Naive thymus-derived CD4-positive, alpha-beta T cell (primary cell): ENCODE measurements at regions of chr12 and their contacts with region 1.

Region 1: GRCh38 chr12:9707864-9708808 is 24.8 kb downstream of the CLECL1 start:
- DNase-seq: peak; percentile 35 to 79 (median 72)
- ATAC-seq: peak; percentile 92
- H3K4me3 ChIP-seq: peak overlapping the region; percentile 46
- H3K4me3 Mint-ChIP-seq: peak overlapping the region; percentile 56 to 82 (median 73)
- H3K27ac ChIP-seq: peak overlapping the region; percentile 66
- H3K27ac Mint-ChIP-seq: peak overlapping the region; percentile 80 to 98 (median 95)
- H3K4me1 ChIP-seq: peaks cover 30 to 31% of the 10 kb centered on the region in 2 donors
- H3K4me1 Mint-ChIP-seq: peaks cover 34 to 86% (median 81%) of the 10 kb centered on the region in 7 donors
- H3K27me3 ChIP-seq: no peaks in the 10 kb centered on the region
- H3K27me3 Mint-ChIP-seq: no peaks in the 10 kb centered on the region

Region 2: GRCh38 chr12:9331218-9331626 is 376.9 kb before region 1 on chr12:
- CTCF ChIA-PET with region 1: interaction called, 3 read pairs
- POLR2A ChIA-PET with region 1: no interaction called
- intact Hi-C with region 1: loop called (anchors 1 to 2 kb)
- DNase-seq: peak; percentile 21 to 77 (median 55)
- ATAC-seq: peak; percentile 87
- H3K4me3 ChIP-seq: no peak overlapping the region
- H3K4me3 Mint-ChIP-seq: peak overlapping the region in 2 of 10 donors; percentile 6 to 33
- H3K27ac ChIP-seq: no peak overlapping the region
- H3K27ac Mint-ChIP-seq: peak overlapping the region in 4 of 9 donors; percentile 50 to 66 (median 62)
- H3K4me1 ChIP-seq: peaks cover 0 to 3% of the 10 kb centered on the region in 2 donors
- H3K4me1 Mint-ChIP-seq: peaks cover 18 to 31% (median 23%) of the 10 kb centered on the region in 7 donors
- H3K27me3 ChIP-seq: no peaks in the 10 kb centered on the region
- H3K27me3 Mint-ChIP-seq: peaks cover 0 to 2% (median 0%) of the 10 kb centered on the region in 5 donors

Region 3: DNA sequence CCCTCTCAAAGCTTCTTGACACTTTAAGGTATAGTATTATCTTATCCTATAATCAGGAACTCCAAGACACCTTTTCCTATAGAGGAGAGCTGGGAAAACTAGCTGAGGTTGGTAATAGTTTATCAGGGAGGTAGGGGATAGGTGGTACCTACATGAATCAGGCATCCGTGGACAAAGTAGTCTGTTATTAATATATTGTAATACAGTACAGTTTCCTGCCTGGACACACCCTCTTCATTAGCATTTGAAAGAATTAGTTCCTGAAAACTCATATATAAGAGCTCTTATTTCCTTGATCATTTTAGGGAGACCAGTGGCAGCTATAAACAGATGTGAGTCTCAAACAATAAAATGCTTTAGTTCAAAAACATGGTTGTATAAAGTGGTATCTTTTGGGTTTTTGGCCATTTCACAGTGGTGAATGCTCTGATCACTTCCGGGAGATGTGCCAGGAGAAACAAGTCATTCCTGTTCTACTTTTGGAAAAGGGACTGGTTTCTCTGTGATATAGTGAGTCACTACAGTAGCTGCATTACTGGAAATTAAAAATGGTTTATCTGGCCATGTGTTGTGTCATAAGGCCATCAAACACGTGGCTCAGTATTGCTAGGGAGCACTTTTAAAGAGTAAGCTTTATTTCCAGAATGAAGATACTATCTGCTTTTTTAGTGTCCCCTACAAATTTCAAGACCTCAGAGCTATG is 198.5 kb before region 1 on chr12:
- CTCF ChIA-PET with region 1: no interaction called
- POLR2A ChIA-PET with region 1: no interaction called
- intact Hi-C with region 1: loop called in 1 of 2 experiments (anchors 10 kb)
- DNase-seq: no peak
- ATAC-seq: no peak
- H3K4me3 ChIP-seq: no peak overlapping the region
- H3K4me3 Mint-ChIP-seq: no peak overlapping the region
- H3K27ac ChIP-seq: no peak overlapping the region
- H3K27ac Mint-ChIP-seq: peak overlapping the region in 3 of 9 donors; percentile 44 to 84 (median 73)
- H3K4me1 ChIP-seq: no peaks in the 10 kb centered on the region
- H3K4me1 Mint-ChIP-seq: peaks cover 0 to 22% (median 11%) of the 10 kb centered on the region in 7 donors
- H3K27me3 ChIP-seq: no peaks in the 10 kb centered on the region
- H3K27me3 Mint-ChIP-seq: no peaks in the 10 kb centered on the region

Region 4: DNA sequence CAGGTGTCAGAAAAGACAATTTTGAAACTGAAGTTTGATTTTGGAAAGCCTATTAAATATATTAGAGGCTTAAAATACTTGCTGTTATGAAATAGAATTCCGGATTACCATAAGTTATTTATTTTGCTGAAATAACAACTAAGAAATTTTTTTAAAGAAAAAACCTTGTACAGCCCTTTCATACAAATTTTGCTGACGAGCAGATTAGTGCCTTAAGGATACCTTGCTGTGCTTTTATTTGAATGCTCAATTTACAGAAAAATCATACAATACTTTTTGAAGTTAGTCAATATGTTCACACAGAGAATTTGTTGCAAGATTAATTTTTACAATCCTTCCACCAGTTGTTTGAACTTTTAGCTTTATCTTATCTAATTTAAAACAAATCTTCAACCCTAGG is 68.1 kb before region 1 on chr12:
- CTCF ChIA-PET with region 1: interaction called, 89 read pairs
- POLR2A ChIA-PET with region 1: interaction called, 46 read pairs
- intact Hi-C with region 1: no loop called
- DNase-seq: no peak
- ATAC-seq: no peak
- H3K4me3 ChIP-seq: no peak overlapping the region
- H3K4me3 Mint-ChIP-seq: no peak overlapping the region
- H3K27ac ChIP-seq: no peak overlapping the region
- H3K27ac Mint-ChIP-seq: no peak overlapping the region
- H3K4me1 ChIP-seq: peaks cover 23 to 28% of the 10 kb centered on the region in 2 donors
- H3K4me1 Mint-ChIP-seq: peaks cover 22 to 83% (median 70%) of the 10 kb centered on the region in 7 donors
- H3K27me3 ChIP-seq: no peaks in the 10 kb centered on the region
- H3K27me3 Mint-ChIP-seq: no peaks in the 10 kb centered on the region

Region 5: GRCh38 chr12:9673404-9674225 is 34.5 kb before region 1 on chr12:
- CTCF ChIA-PET with region 1: interaction called, 12 read pairs
- POLR2A ChIA-PET with region 1: interaction called, 51 read pairs
- intact Hi-C with region 1: loop called (anchors 1 to 2 kb)
- DNase-seq: peak in 7 of 9 donors; percentile 36 to 67 (median 45)
- ATAC-seq: peak; percentile 63
- H3K4me3 ChIP-seq: peak overlapping the region; percentile 80
- H3K4me3 Mint-ChIP-seq: peak overlapping the region; percentile 89 to 99 (median 92)
- H3K27ac ChIP-seq: peak overlapping the region; percentile 83
- H3K27ac Mint-ChIP-seq: peak overlapping the region; percentile 90 to 99 (median 95)
- H3K4me1 ChIP-seq: peaks cover 30 to 38% of the 10 kb centered on the region in 2 donors
- H3K4me1 Mint-ChIP-seq: peaks cover 42 to 80% (median 69%) of the 10 kb centered on the region in 7 donors
- H3K27me3 ChIP-seq: no peaks in the 10 kb centered on the region
- H3K27me3 Mint-ChIP-seq: peaks cover 0 to 8% (median 0%) of the 10 kb centered on the region in 5 donors

Region 6: DNA sequence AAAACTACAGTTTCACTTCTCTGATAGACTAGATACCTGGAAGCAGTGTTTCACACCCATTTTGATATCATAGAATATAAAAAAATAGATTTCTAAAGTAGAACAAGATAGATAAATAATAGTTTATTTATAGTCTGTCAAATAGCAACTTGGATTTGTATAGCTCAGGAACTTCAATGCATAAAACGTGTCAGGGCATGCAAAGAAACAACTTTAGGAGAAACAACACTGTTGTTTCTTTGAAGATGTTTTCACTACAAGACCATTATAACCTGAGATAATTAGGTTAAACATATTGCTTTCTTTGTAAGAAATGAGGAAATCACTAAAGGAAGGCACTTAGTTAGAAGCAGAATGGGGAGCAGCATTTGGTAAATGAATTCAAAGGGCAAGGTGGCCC is 17.3 kb after region 1 on chr12:
- CTCF ChIA-PET with region 1: interaction called, 7 read pairs
- POLR2A ChIA-PET with region 1: interaction called, 5 read pairs
- intact Hi-C with region 1: loop called (anchors 2 kb)
- DNase-seq: no peak
- ATAC-seq: no peak
- H3K4me3 ChIP-seq: no peak overlapping the region
- H3K4me3 Mint-ChIP-seq: no peak overlapping the region
- H3K27ac ChIP-seq: no peak overlapping the region
- H3K27ac Mint-ChIP-seq: no peak overlapping the region
- H3K4me1 ChIP-seq: no peaks in the 10 kb centered on the region
- H3K4me1 Mint-ChIP-seq: peaks cover 2 to 45% (median 16%) of the 10 kb centered on the region in 7 donors
- H3K27me3 ChIP-seq: no peaks in the 10 kb centered on the region
- H3K27me3 Mint-ChIP-seq: no peaks in the 10 kb centered on the region

Region 7: GRCh38 chr12:9741726-9742125 is 33.6 kb after region 1 on chr12:
- CTCF ChIA-PET with region 1: interaction called, 5 read pairs
- POLR2A ChIA-PET with region 1: interaction called, 39 read pairs
- intact Hi-C with region 1: loop called (anchors 1 to 2 kb)
- DNase-seq: peak in 8 of 9 donors; percentile 63 to 95 (median 90)
- ATAC-seq: peak; percentile 84
- H3K4me3 ChIP-seq: peak overlapping the region; percentile 15
- H3K4me3 Mint-ChIP-seq: peak overlapping the region; percentile 22 to 95 (median 83)
- H3K27ac ChIP-seq: peak overlapping the region; percentile 76
- H3K27ac Mint-ChIP-seq: peak overlapping the region; percentile 89 to 100 (median 98)
- H3K4me1 ChIP-seq: peaks cover 55 to 59% of the 10 kb centered on the region in 2 donors
- H3K4me1 Mint-ChIP-seq: peaks cover 51 to 81% (median 71%) of the 10 kb centered on the region in 7 donors
- H3K27me3 ChIP-seq: no peaks in the 10 kb centered on the region
- H3K27me3 Mint-ChIP-seq: peaks cover 0 to 6% (median 0%) of the 10 kb centered on the region in 5 donors

Region 8: GRCh38 chr12:9843416-9843815 is 135.3 kb after region 1 on chr12:
- CTCF ChIA-PET with region 1: no interaction called
- POLR2A ChIA-PET with region 1: no interaction called
- intact Hi-C with region 1: no loop called
- DNase-seq: no peak
- ATAC-seq: no peak
- H3K4me3 ChIP-seq: no peak overlapping the region
- H3K4me3 Mint-ChIP-seq: no peak overlapping the region
- H3K27ac ChIP-seq: no peak overlapping the region
- H3K27ac Mint-ChIP-seq: no peak overlapping the region
- H3K4me1 ChIP-seq: no peaks in the 10 kb centered on the region
- H3K4me1 Mint-ChIP-seq: peaks cover 0 to 12% (median 0%) of the 10 kb centered on the region in 7 donors
- H3K27me3 ChIP-seq: no peaks in the 10 kb centered on the region
- H3K27me3 Mint-ChIP-seq: peaks cover 0 to 46% (median 0%) of the 10 kb centered on the region in 5 donors

Region 9: GRCh38 chr12:9906873-9907272 is 198.7 kb after region 1 on chr12:
- CTCF ChIA-PET with region 1: no interaction called
- POLR2A ChIA-PET with region 1: no interaction called
- intact Hi-C with region 1: no loop called
- DNase-seq: peak in 8 of 9 donors; percentile 26 to 68 (median 47)
- ATAC-seq: peak; percentile 96
- H3K4me3 ChIP-seq: no peak overlapping the region
- H3K4me3 Mint-ChIP-seq: peak overlapping the region; percentile 48 to 77 (median 68)
- H3K27ac ChIP-seq: peak overlapping the region; percentile 51
- H3K27ac Mint-ChIP-seq: peak overlapping the region; percentile 74 to 98 (median 83)
- H3K4me1 ChIP-seq: peaks cover 9 to 20% of the 10 kb centered on the region in 2 donors
- H3K4me1 Mint-ChIP-seq: peaks cover 16 to 45% (median 36%) of the 10 kb centered on the region in 7 donors
- H3K27me3 ChIP-seq: no peaks in the 10 kb centered on the region
- H3K27me3 Mint-ChIP-seq: peaks cover 0 to under 1% (median 0%) of the 10 kb centered on the region in 5 donors

Region 10: GRCh38 chr12:10673660-10674384 is 965.7 kb after region 1 on chr12 and contains the start of gene STYK1:
- CTCF ChIA-PET with region 1: no interaction called
- POLR2A ChIA-PET with region 1: no interaction called
- intact Hi-C with region 1: no loop called
- DNase-seq: peak; percentile 40 to 68 (median 59)
- ATAC-seq: peak; percentile 90
- H3K4me3 ChIP-seq: peak within 1 kb of the TSS; percentile 45
- H3K4me3 Mint-ChIP-seq: peak within 1 kb of the TSS; percentile 66 to 85 (median 80)
- H3K27ac ChIP-seq: no peak within 1 kb of the TSS
- H3K27ac Mint-ChIP-seq: peak within 1 kb of the TSS in 5 of 9 donors; percentile 22 to 83 (median 60)
- H3K4me1 ChIP-seq: peaks cover 8 to 18% of the 10 kb centered on the region in 2 donors
- H3K4me1 Mint-ChIP-seq: peaks cover 20 to 64% (median 32%) of the 10 kb centered on the region in 7 donors
- H3K27me3 ChIP-seq: peaks cover 0 to 8% of the 10 kb centered on the region in 2 donors
- H3K27me3 Mint-ChIP-seq: peaks cover 30 to 60% (median 45%) of the 10 kb centered on the region in 5 donors
- total RNA-seq, gene STYK1: 0.24 to 1.6 (median 0.34) TPM in 3 of 5 experiments, not detected in the others